ENCODE measurements at regions of chr17 and their contacts with region 1.

Region 1: DNA sequence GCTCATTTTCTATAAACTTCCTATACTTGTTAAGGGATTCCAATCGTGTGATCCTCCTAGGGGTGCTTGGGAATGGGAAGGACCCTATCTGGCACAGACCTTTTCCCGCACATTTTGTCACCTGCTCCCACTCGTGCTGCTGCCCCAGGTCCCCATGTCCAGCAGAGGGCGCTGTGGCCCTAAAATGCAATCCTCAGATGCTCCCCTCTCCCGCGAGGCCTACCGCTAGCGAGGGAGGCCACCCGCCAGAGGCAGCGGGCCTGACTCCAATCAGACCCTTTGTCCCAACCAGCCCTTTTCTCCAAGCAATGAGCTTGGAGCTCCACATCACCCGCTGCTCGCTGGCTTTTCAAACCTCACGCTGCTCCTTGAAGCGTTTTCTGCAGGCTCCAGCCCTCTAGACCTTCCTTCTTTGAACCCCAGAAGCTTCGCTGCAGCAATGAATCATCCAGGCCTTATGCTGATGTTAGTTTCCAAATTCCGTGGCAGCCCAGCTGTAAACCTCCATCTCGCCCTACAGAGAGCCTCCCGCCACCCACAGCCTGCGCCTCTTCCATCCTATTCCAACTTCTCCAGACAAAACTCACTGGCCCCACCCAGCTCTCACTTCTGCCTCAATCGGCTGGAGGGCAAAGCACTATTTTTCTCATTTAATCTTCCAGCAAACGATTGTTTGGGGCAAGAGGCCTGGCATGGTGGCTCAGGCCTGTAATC is 23.6 kb upstream of the FZD2 start:
- DNase-seq: peak; percentile 93 to 99
- ATAC-seq: peak; percentile 91 to 95
- H3K4me3 ChIP-seq: no peak overlapping the region
- H3K27ac ChIP-seq: peak overlapping the region; percentile 92 to 93
- H3K4me1 ChIP-seq: peaks cover 37% of the 10 kb centered on the region
- CTCF ChIP-seq: peak; percentile 99
- EP300 ChIP-seq: no peak
- POLR2A ChIP-seq: no peak
- RAD21 ChIP-seq: peak; percentile 100

Region 2: DNA sequence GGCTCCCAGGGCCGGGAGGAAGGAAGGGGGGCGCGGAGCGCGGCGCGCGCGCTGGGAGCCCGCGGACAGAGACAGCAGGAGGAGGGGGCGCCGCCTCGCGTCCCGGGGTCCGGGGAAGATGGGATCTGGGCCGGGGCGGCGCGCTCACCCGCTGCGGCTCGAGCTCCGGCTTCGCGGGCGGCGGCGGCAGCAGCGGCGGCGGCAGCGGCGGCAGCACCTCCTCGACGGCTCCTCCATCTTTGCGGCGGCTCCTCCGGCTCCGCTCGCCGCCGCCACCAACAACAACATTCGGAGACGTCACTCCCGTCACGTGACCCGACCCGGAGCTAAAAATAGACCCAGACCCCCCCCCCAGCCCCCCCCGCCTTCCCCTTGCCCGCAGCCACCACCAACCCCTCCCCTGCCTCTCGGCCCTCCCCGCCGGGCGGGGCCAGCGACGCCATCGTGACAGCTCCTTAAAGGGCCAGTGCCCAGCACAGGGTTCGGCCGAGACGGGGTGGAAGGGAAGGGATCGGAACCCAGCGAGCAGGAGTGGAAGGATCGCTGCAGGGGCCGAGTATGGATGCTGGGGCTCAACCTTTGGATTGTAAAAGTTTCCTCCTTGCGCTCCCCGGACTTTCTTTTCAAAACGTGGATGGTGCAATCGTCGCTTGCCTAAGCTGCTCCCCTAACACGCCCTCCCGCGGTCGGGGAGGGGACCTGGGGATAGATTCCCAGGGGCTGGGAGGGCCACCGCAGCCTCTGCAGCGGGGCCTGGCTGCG is 410.2 kb before region 1 on chr17 and contains the start of gene HDAC5:
- CTCF ChIA-PET with region 1: no interaction called
- POLR2A ChIA-PET with region 1: no interaction called
- DNase-seq: peak; percentile 92 to 96
- ATAC-seq: peak; percentile 84 to 92
- H3K4me3 ChIP-seq: peak within 1 kb of the TSS; percentile 81
- H3K27ac ChIP-seq: peak within 1 kb of the TSS; percentile 87 to 93
- H3K4me1 ChIP-seq: peaks cover 28% of the 10 kb centered on the region
- CTCF ChIP-seq: peak; percentile 68
- EP300 ChIP-seq: no peak
- POLR2A ChIP-seq: peak; percentile 60
- RAD21 ChIP-seq: peak; percentile 53 to 63
- polyA plus RNA-seq, gene HDAC5: 3.1 and 5.7 TPM in 2 replicates

Region 3: GRCh38 chr17:44324092-44324570 is 209.6 kb before region 1 on chr17:
- CTCF ChIA-PET with region 1: no interaction called
- POLR2A ChIA-PET with region 1: no interaction called
- DNase-seq: no peak
- ATAC-seq: peak; percentile 2 to 5; a peak in 3 of 6 replicates
- H3K4me3 ChIP-seq: peak overlapping the region; percentile 98
- H3K27ac ChIP-seq: peak overlapping the region; percentile 93
- H3K4me1 ChIP-seq: peaks cover 17% of the 10 kb centered on the region
- CTCF ChIP-seq: no peak
- EP300 ChIP-seq: no peak
- POLR2A ChIP-seq: no peak
- RAD21 ChIP-seq: no peak

Region 4: GRCh38 chr17:44444735-44445105 is 89.0 kb before region 1 on chr17:
- CTCF ChIA-PET with region 1: interaction called, 14 read pairs
- POLR2A ChIA-PET with region 1: no interaction called
- DNase-seq: peak in 1 of 2 experiments; percentile 65
- ATAC-seq: peak; percentile 56 to 74; a peak in 5 of 6 replicates
- H3K4me3 ChIP-seq: no peak overlapping the region
- H3K27ac ChIP-seq: peak overlapping the region; percentile 65 to 82
- H3K4me1 ChIP-seq: peaks cover 20% of the 10 kb centered on the region
- CTCF ChIP-seq: no peak
- EP300 ChIP-seq: no peak
- POLR2A ChIP-seq: no peak
- RAD21 ChIP-seq: no peak

Region 5: DNA sequence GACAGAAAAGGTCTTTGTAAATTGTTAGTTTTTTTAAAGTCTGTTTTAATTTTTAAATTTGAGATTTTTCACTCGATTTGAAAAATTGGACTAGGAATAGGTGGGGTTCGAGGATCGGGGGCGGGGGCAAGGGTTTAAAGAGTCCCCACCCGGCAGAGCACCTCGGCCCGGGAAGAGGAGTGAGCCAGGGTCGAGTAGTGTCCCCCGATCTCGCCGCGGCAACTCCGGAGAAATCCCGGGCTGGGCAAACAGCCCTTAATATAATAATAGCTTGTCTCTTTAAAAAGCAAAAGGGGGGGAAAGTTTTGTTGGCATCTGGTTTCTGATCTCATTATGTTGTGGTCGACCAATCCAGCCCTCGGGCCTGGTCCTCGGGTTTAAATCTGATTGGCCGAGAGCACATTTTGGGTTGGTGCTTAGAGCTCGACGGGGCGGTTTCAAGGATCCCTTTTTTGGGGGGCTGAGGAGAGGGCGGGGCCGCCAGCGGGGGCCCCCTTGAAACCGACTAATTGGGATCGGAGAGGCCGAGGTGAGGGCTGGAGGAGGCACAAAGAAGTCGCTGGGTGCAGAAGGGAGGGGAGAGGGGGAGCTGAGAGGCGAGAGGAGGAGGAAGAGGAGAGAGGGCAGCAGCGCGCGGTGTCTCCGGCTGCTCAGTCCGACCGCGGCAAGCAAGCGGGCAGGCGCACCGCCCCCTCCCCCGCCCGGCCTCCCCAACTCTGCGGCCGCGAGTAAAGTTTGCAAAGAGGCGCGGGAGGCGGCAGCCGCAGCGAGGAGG is 23.3 kb after region 1 on chr17 and contains the start of gene FZD2:
- CTCF ChIA-PET with region 1: interaction called, 81 read pairs
- POLR2A ChIA-PET with region 1: interaction called, 41 read pairs
- DNase-seq: peak; percentile 98 to 99
- ATAC-seq: peak; percentile 89 to 95
- H3K4me3 ChIP-seq: peak within 1 kb of the TSS; percentile 56
- H3K27ac ChIP-seq: peak within 1 kb of the TSS; percentile 94 to 95
- H3K4me1 ChIP-seq: peaks cover 65% of the 10 kb centered on the region
- CTCF ChIP-seq: no peak
- EP300 ChIP-seq: no peak
- POLR2A ChIP-seq: peak; percentile 68
- RAD21 ChIP-seq: peak in 1 of 2 experiments; percentile 9; a peak in 3 of 5 replicates
- polyA plus RNA-seq, gene FZD2: 25.8 and 26.9 TPM in 2 replicates

Region 6: GRCh38 chr17:44587339-44587738 is 53.6 kb after region 1 on chr17:
- CTCF ChIA-PET with region 1: interaction called, 103 read pairs
- POLR2A ChIA-PET with region 1: interaction called, 7 read pairs
- DNase-seq: peak; percentile 96 to 97
- ATAC-seq: peak; percentile 100
- H3K4me3 ChIP-seq: no peak overlapping the region
- H3K27ac ChIP-seq: peak overlapping the region; percentile 94 to 98
- H3K4me1 ChIP-seq: peaks cover 50% of the 10 kb centered on the region
- CTCF ChIP-seq: no peak
- EP300 ChIP-seq: peak; percentile 49 to 77; a peak in 2 of 5 replicates
- POLR2A ChIP-seq: no peak
- RAD21 ChIP-seq: peak; percentile 46 to 48; a peak in 3 of 5 replicates

Region 7: GRCh38 chr17:44623070-44623725 is 89.5 kb after region 1 on chr17:
- CTCF ChIA-PET with region 1: interaction called, 324 read pairs
- POLR2A ChIA-PET with region 1: no interaction called
- DNase-seq: peak in 1 of 2 experiments; percentile 49
- ATAC-seq: peak; percentile 58 to 72; a peak in 3 of 6 replicates
- H3K4me3 ChIP-seq: no peak overlapping the region
- H3K27ac ChIP-seq: peak overlapping the region in 1 of 2 experiments; percentile 15; a peak in 1 of 6 replicates
- H3K4me1 ChIP-seq: no peaks in the 10 kb centered on the region
- CTCF ChIP-seq: peak; percentile 30; the same call in 1 of the 3 replicates
- EP300 ChIP-seq: no peak
- POLR2A ChIP-seq: no peak
- RAD21 ChIP-seq: peak in 1 of 2 experiments; percentile 50; a peak in 2 of 5 replicates

Region 8: DNA sequence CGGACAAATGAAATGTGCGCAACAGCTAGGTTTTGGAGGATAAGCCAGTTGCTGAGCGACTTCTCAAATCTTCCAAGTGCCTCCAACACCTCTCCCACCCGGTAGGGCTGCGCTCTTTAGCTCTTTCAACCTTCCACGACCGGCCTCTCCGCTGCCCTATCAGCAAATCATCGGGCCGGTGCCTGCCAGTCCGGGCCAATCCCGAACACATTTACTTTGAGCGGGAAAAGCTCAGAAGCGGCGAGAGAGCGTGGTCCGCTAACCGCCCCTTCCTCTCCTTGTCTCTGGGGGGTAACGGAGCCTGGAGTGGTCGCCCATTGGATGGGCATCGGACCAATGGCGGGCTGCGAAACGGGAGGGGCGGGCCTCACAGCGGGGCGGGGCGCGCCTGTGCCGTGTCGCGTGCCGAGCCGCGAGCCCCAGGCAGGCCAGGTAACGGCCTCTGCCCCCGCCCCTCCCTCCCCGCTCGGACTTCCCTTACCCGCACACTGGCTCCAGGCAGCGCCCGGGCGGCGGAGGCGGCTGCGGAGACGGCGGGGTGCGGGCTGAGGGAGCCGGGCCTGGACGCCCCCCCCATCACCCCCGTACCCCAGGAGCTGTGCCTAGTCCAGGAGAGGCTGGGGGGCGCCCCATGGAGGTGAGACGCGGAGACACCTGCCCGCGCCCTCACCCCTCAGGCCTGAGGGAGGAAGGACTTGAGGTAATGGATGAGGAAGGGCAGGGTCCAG is 122.5 kb after region 1 on chr17 and contains the start of gene MEIOC:
- CTCF ChIA-PET with region 1: interaction called, 37 read pairs
- POLR2A ChIA-PET with region 1: no interaction called
- DNase-seq: peak; percentile 95 to 97
- ATAC-seq: peak; percentile 97
- H3K4me3 ChIP-seq: peak within 1 kb of the TSS; percentile 58
- H3K27ac ChIP-seq: peak within 1 kb of the TSS; percentile 71 to 89
- H3K4me1 ChIP-seq: 0 out of 3 replicates have a peak, but pooled peaks cover 4% of the 10 kb centered on the region
- CTCF ChIP-seq: peak; percentile 46
- EP300 ChIP-seq: no peak
- POLR2A ChIP-seq: no peak; the same call in 1 of the 2 replicates
- RAD21 ChIP-seq: peak in 1 of 2 experiments; percentile 19; a peak in 1 of 5 replicates
- polyA plus RNA-seq, gene MEIOC: 18.0 and 18.2 TPM in 2 replicates

Measured in A549 (cell line).